T-cell (primary cell): ENCODE measurements at regions of chr14 and their contacts with region 1.

Region 1: DNA sequence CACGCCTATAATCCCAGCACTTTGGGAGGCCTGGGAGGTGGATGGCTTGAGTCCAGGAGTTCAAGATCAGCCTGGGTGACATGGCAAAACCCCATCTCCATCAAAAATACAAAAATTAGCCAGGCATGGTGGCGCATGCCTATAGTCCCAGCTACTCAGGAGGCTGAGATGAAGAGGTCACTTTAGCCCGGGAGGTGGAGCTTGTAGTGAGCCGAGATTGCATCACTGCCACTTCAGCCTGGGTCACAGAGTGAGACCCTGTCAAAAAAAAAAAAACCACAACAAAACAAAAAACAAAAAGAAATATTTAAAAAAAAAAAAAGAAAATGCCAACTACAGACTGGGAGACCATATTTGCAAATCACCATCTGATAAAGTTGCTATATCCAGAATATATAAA is 17.5 kb downstream of the WDR89 start:
- DNase-seq: no peak
- ATAC-seq: no peak
- H3K4me3 ChIP-seq: no peak overlapping the region
- H3K4me3 Mint-ChIP-seq: no peak overlapping the region
- H3K27ac ChIP-seq: no peak overlapping the region
- H3K27ac Mint-ChIP-seq: no peak overlapping the region
- H3K4me1 ChIP-seq: peaks cover 0 to 2% of the 10 kb centered on the region in 2 experiments
- H3K4me1 Mint-ChIP-seq: peaks cover 38 to 49% (median 39%) of the 10 kb centered on the region in 3 donors
- H3K27me3 ChIP-seq: no peaks in the 10 kb centered on the region
- H3K27me3 Mint-ChIP-seq: no peaks in the 10 kb centered on the region

Region 2: DNA sequence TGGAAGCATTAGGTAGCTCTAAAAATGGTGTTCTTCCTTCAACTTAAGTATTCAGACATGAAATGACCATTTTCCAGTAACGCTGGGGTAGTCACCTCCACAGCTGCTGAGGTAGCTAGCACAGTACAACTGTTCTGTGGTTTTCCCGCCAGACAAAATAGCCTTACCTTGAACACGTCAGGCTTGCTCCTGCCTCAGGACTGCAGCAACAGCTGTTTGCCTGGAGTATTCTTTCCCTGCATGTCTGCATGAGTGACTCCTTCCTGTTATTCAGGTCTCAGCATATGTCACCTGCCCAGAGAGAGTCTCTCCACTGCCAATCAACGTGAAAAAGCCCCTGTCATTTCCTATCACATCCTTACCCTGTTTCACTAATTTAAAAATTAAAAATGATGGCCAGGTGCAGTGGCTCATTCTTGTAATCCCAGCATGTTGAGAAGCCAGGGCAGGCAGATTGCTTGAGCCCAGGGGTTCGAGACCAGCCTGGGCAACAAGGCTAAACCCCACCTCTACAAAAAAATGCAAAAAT is 20.4 kb before region 1 on chr14:
- CTCF ChIA-PET with region 1: interaction called, 3 read pairs
- POLR2A ChIA-PET with region 1: interaction called, 3 to 10 read pairs
- DNase-seq: no peak
- ATAC-seq: no peak
- H3K4me3 ChIP-seq: no peak overlapping the region
- H3K4me3 Mint-ChIP-seq: no peak overlapping the region
- H3K27ac ChIP-seq: no peak overlapping the region
- H3K27ac Mint-ChIP-seq: peak overlapping the region in 1 of 2 donors; percentile 48
- H3K4me1 ChIP-seq: peaks cover 0 to 3% of the 10 kb centered on the region in 2 experiments
- H3K4me1 Mint-ChIP-seq: peaks cover 14 to 25% (median 16%) of the 10 kb centered on the region in 3 donors
- H3K27me3 ChIP-seq: no peaks in the 10 kb centered on the region
- H3K27me3 Mint-ChIP-seq: no peaks in the 10 kb centered on the region

Region 3: DNA sequence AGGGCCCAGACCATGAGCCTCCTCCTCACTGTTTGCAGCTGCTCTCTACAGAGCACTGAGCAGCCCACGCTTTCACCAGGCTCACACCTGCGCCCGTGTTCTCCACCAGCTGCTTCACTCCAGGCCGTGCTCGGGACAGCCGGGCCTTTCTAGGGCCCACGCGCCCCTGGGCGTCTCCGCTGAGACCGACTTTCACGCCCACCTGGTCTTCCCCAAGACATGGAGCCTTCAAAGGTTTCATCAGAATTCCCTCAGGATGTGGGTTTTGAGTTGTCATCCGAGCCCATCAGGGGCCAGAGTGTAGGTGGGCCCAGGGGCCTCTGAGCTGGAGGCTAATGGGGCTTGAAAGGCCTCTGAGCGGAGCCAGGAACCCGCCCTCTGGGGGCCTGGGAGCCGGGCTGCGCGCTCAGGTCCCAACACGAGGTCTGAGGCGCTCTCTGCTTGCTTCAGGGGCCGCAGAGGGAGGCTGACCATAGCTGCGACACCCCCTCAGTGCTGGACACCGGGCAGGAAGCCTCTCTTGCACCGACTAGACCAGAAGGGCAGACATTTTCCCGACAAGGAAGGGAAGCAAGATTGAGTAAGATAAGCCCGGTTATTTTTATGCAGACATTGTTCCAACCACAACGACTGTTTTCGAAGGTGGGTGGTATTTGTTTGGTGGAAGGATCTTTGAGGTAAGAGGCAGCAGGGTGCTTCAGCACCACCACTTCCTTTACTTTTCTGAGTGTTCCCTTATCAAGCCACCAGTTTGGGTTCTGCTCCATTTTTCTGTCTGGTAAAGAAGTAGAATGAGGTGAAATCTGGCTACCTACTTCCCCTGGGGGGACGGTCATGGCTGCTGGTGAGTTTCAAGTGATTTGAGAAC is 1663.3 kb after region 1 on chr14:
- CTCF ChIA-PET with region 1: no interaction called
- POLR2A ChIA-PET with region 1: no interaction called
- DNase-seq: peak in 34 of 35 experiments; percentile 8 to 73 (median 36)
- ATAC-seq: peak; percentile 85 to 92 (median 86)
- H3K4me3 ChIP-seq: peak overlapping the region; percentile 7 to 29
- H3K4me3 Mint-ChIP-seq: peak overlapping the region; percentile 70 to 79 (median 74)
- H3K27ac ChIP-seq: peak overlapping the region; percentile 82
- H3K27ac Mint-ChIP-seq: peak overlapping the region; percentile 98 to 99
- H3K4me1 ChIP-seq: peaks cover 50 to 73% of the 10 kb centered on the region in 2 experiments
- H3K4me1 Mint-ChIP-seq: peaks cover 72 to 77% (median 76%) of the 10 kb centered on the region in 3 donors
- H3K27me3 ChIP-seq: no peaks in the 10 kb centered on the region
- H3K27me3 Mint-ChIP-seq: no peaks in the 10 kb centered on the region